Activated B cell treated with CpG ODN at 0.5 μM for 24 hours (primary cell): ENCODE measurements at regions of chr1 and their contacts with region 1.

Region 1: DNA sequence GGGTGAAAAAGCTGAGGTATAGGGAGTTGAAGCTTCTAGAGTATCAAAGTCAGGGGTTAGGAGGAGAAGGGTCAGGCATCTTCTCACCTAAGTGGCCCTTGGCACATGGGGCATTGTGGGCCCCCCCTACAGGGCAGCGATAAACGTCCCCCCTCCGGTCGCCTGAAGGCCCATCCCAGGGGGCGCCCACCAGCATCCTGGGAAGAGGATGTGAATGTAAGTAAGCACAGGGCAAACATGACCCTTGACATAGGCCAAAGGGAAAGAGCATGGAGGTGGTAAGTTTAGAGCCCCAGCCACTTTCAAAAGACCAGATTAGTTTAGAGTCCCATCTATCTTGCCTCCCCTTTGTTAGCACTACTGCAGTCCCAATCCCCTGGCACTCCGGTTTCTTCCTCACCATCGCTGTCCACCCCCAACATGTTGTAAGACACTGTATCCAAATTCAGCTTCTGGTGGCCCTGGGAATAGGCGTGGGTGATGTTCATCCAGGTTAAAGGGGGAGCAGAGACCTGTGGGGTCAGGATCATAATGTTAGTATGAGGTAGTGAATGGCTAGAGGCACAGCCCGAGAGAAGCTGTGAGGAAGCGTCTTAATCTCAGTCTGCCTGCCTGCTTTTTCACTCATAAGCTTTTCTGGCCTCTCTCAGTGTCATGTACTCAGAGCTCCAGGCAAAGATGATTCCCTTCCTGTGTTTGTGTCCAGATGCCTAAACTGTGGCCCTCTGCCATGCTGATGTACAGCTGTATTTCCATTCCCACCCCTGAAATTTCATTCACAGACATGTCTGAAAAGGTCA is 2.7 kb downstream of the ITGA10 start:
- DNase-seq: no peak
- ATAC-seq: no peak
- H3K4me3 Mint-ChIP-seq: no peak overlapping the region
- H3K27ac Mint-ChIP-seq: no peak overlapping the region
- H3K4me1 Mint-ChIP-seq: peaks cover 5% of the 10 kb centered on the region
- H3K27me3 Mint-ChIP-seq: no peaks in the 10 kb centered on the region
- CTCF ChIP-seq: no peak

Region 2: GRCh38 chr1:145785547-145785946 is 121.6 kb before region 1 on chr1:
- CTCF ChIA-PET with region 1: no interaction called
- POLR2A ChIA-PET with region 1: no interaction called
- intact Hi-C with region 1: no loop called
- DNase-seq: no peak
- ATAC-seq: no peak
- H3K4me3 Mint-ChIP-seq: no peak overlapping the region
- H3K27ac Mint-ChIP-seq: no peak overlapping the region
- H3K4me1 Mint-ChIP-seq: no peaks in the 10 kb centered on the region
- H3K27me3 Mint-ChIP-seq: no peaks in the 10 kb centered on the region
- CTCF ChIP-seq: no peak

Region 3: DNA sequence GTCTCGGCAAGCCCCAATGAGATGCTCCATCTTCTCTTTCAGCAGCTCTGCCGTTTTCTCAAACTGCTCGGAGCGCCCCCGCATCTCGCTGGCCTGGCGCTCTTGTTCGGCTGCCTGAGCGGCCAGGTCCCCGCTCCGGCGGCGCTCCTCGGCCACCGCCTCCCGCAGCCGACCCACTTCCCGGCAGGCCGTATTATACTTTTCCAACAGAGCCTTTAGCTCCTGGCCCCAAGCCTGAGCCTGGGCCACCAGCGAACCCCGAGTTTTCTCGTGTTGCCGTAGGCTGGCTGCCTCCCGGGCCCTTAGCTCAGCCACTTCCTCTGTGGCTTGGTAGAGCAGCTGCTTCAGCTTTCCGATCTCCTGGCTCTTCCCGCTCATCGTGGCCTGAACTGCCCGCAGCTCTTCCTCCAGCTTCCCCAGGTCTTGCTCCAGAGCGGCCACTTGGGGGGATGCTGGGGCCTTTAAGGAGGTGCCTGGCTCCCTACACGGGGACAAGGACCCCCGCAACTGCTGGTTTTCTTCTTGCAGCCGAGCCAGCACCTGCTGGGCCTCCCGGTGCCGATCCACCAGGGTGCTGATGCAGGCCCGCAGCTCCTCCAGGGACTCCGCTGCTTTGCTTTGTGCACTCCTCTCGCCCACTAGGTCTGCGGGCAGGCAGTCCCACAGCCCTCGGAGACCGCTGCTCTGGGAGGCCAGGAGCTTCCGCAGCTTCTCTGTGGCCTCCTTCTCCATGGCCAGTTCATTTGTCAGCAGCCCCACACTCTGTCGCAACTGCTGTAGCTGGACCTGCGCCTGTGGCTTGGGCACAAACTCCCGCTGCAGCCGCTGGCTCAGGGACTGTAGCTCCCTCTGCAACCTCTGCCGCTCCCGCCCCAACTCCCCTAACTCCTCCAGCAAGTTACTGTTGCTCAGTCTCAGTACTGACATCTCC is 34.9 kb before region 1 on chr1:
- CTCF ChIA-PET with region 1: no interaction called
- POLR2A ChIA-PET with region 1: no interaction called
- intact Hi-C with region 1: no loop called
- DNase-seq: peak; percentile 45
- ATAC-seq: peak; percentile 81
- H3K4me3 Mint-ChIP-seq: peak overlapping the region; percentile 83
- H3K27ac Mint-ChIP-seq: no peak overlapping the region
- H3K4me1 Mint-ChIP-seq: peaks cover 11% of the 10 kb centered on the region
- H3K27me3 Mint-ChIP-seq: peaks cover 28% of the 10 kb centered on the region
- CTCF ChIP-seq: no peak

Region 4: DNA sequence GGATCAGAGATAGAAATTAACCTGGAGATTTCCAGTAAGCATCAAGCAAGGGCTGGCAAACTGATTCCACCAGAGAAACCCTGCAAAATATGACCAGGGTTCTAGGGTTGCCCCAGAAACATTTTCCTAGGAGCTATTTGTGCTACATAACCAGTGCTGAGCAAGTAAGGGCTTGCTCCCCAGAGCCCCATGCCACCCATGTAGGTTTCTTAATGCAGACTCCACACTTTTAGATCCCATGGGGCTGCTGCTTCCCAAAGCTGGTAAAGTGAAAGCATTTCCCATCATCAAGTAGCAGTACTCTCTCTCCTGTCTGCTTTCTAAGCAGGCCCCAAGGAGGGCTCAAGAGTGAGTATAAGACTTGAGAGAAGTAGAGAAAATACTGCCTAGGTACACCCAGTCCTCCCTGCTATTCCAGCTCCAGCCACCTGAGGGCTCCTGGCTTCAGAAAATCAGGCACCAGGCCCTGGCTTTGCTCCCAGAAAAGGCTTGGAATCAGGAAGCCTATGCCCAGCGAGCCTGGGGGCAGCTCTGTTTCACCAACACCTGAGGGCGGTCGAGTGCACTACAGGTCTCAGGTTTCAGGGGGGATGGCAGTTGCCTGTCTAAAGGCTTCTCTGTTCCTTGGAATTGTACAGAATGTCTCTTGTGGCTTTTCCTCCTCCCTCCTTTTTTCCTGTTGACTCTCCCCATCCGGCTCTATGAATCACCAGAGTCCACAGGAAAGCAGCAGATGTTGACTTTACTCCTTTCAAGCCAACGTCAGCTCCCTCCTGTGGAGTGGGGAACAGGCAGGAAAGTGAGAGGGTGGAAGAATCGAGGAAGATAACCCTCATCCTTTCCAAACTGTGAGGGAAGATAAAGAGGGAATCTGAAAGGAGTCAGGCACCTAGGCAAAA is 15.3 kb before region 1 on chr1:
- CTCF ChIA-PET with region 1: interaction called, 4 read pairs
- POLR2A ChIA-PET with region 1: no interaction called
- intact Hi-C with region 1: loop called (anchors 2 kb)
- DNase-seq: peak; percentile 35
- ATAC-seq: peak; percentile 75
- H3K4me3 Mint-ChIP-seq: no peak overlapping the region
- H3K27ac Mint-ChIP-seq: no peak overlapping the region
- H3K4me1 Mint-ChIP-seq: no peaks in the 10 kb centered on the region
- H3K27me3 Mint-ChIP-seq: no peaks in the 10 kb centered on the region
- CTCF ChIP-seq: no peak

Region 5: DNA sequence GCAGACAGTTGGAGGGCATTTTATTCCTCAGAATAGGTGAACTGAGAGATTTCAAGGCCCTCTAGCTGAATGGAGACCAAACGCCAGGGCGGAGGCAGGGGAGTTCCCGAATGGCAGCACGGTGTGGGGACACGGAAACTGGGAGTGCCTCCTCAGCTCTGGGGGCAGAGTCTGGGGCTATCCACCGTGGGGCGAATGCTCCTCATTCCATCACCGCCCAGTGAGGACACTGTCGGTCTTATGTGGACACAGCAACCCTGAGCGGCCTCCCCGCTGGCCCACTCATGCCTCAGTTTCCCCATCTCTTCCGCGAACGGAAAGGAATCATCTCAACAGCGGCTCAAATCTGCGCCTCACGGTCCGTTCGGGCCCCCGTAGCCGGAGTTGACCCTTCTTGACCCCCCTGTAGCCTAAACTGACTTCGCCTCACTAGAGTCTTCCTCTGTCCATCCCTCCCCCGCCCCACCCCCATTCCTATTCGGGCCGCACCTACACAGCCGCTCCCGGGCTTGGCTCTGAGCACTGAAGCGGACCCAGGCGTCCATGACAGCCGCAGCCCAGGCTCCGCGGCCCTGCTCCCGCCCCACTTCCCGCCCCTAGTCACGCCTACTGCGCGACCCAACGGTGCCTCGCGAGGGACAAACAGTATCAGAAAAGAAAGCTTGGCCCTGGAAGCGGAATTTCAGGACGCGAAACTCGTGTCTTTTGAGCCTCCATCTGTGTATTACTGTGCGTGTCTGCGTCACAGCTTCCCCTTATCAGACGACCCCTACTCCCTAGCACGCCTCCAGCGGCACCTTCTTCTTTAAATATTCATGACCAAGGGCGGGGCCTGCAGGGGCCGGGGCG is 11.2 kb after region 1 on chr1 and contains the start of gene PEX11B:
- CTCF ChIA-PET with region 1: interaction called, 5 read pairs
- POLR2A ChIA-PET with region 1: interaction called, 10 read pairs
- intact Hi-C with region 1: no loop called
- DNase-seq: peak; percentile 88
- ATAC-seq: peak; percentile 90
- H3K4me3 Mint-ChIP-seq: peak within 1 kb of the TSS; percentile 95
- H3K27ac Mint-ChIP-seq: peak within 1 kb of the TSS; percentile 93
- H3K4me1 Mint-ChIP-seq: peaks cover 35% of the 10 kb centered on the region
- H3K27me3 Mint-ChIP-seq: no peaks in the 10 kb centered on the region
- CTCF ChIP-seq: no peak
- total RNA-seq, gene PEX11B: 42.7 and 47.7 TPM in 2 replicates

Region 6: GRCh38 chr1:147599362-147600118 is 1692.4 kb after region 1 on chr1:
- CTCF ChIA-PET with region 1: no interaction called
- POLR2A ChIA-PET with region 1: no interaction called
- intact Hi-C with region 1: no loop called
- DNase-seq: peak; percentile 92
- ATAC-seq: peak; percentile 84
- H3K4me3 Mint-ChIP-seq: peak overlapping the region; percentile 87
- H3K27ac Mint-ChIP-seq: peak overlapping the region; percentile 37
- H3K4me1 Mint-ChIP-seq: peaks cover 19% of the 10 kb centered on the region
- H3K27me3 Mint-ChIP-seq: no peaks in the 10 kb centered on the region
- CTCF ChIP-seq: no peak